ENCODE measurements at regions of chr9 and their contacts with region 1.

Region 1: GRCh38 chr9:131253891-131254491 is 22.3 kb downstream of the FAM78A start:
- DNase-seq: no peak
- ATAC-seq: no peak
- H3K4me3 ChIP-seq: no peak overlapping the region
- H3K4me3 Mint-ChIP-seq: peak overlapping the region; percentile 91
- H3K27ac ChIP-seq: peak overlapping the region; percentile 59
- H3K27ac Mint-ChIP-seq: peak overlapping the region; percentile 95 to 99
- H3K4me1 ChIP-seq: peaks cover 84% of the 10 kb centered on the region
- H3K4me1 Mint-ChIP-seq: peaks cover 38 to 56% of the 10 kb centered on the region in 2 donors
- H3K27me3 ChIP-seq: no peaks in the 10 kb centered on the region
- H3K27me3 Mint-ChIP-seq: no peaks in the 10 kb centered on the region
- CTCF ChIP-seq: no peak

Region 2: GRCh38 chr9:131275332-131276093 is 21.5 kb after region 1 on chr9:
- intact Hi-C with region 1: loop called (anchors 2 kb)
- DNase-seq: peak in 1 of 2 donors; percentile 56
- ATAC-seq: peak in 2 of 3 donors; percentile 30 to 40
- H3K4me3 ChIP-seq: peak overlapping the region; percentile 91
- H3K4me3 Mint-ChIP-seq: peak overlapping the region; percentile 99
- H3K27ac ChIP-seq: peak overlapping the region; percentile 87
- H3K27ac Mint-ChIP-seq: peak overlapping the region; percentile 91 to 95
- H3K4me1 ChIP-seq: peaks cover 62% of the 10 kb centered on the region
- H3K4me1 Mint-ChIP-seq: peaks cover 53 to 67% of the 10 kb centered on the region in 2 donors
- H3K27me3 ChIP-seq: no peaks in the 10 kb centered on the region
- H3K27me3 Mint-ChIP-seq: no peaks in the 10 kb centered on the region
- CTCF ChIP-seq: no peak

Region 3: GRCh38 chr9:131393622-131394463 is 139.9 kb after region 1 on chr9 and contains the start of gene PRRC2B:
- intact Hi-C with region 1: loop called (anchors 5 kb)
- DNase-seq: peak; percentile 78 to 93
- ATAC-seq: peak; percentile 65 to 81 (median 70)
- H3K4me3 ChIP-seq: peak within 1 kb of the TSS; percentile 41
- H3K4me3 Mint-ChIP-seq: peak within 1 kb of the TSS; percentile 92
- H3K27ac ChIP-seq: peak within 1 kb of the TSS; percentile 72
- H3K27ac Mint-ChIP-seq: peak within 1 kb of the TSS; percentile 92 to 93
- H3K4me1 ChIP-seq: peaks cover 46% of the 10 kb centered on the region
- H3K4me1 Mint-ChIP-seq: peaks cover 41 to 47% of the 10 kb centered on the region in 2 donors
- H3K27me3 ChIP-seq: no peaks in the 10 kb centered on the region
- H3K27me3 Mint-ChIP-seq: no peaks in the 10 kb centered on the region
- CTCF ChIP-seq: peak; percentile 52
- total RNA-seq, gene PRRC2B: 249 to 275 (median 274) TPM

Measured in natural killer cell (primary cell).